Naive thymus-derived CD4-positive, alpha-beta T cell (primary cell): ENCODE measurements at regions of chr2 and their contacts with region 1.

Region 1: DNA sequence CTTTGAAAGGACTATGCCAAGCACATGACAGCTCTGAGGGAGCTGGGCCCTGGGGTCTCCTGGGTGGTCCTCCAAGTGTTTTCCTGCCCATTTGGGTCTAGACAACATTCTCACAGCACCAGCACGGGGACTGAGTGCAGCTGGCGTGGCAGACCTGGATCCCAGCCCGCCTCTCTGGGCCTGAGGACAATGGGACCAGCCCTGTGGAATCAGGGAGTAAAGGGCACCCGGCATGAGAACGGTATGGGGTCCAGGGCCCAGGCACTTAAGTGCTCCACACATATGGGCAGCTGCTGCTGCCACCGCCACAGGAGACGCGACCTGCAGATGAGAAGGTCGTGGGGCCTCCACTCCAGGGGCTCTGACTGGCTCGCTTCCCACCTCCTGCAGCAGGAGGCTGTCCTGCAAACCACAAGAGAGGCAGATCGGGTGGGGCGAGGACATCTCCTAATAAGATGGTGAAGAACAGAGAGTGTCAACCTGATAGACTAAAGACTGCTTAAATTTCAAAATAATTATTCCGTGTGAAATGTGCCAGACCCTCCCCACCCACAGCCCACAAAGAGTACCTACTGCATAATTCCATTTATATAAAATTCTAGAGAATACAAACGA is 46.3 kb downstream of the FAM178B start:
- DNase-seq: no peak
- ATAC-seq: no peak
- H3K4me3 ChIP-seq: no peak overlapping the region
- H3K4me3 Mint-ChIP-seq: peak overlapping the region in 8 of 10 donors; percentile 50 to 92 (median 78)
- H3K27ac ChIP-seq: no peak overlapping the region
- H3K27ac Mint-ChIP-seq: peak overlapping the region in 8 of 9 donors; percentile 43 to 94 (median 80)
- H3K4me1 ChIP-seq: peaks cover 19 to 25% of the 10 kb centered on the region in 2 donors
- H3K4me1 Mint-ChIP-seq: peaks cover 24 to 55% (median 46%) of the 10 kb centered on the region in 7 donors
- H3K27me3 ChIP-seq: no peaks in the 10 kb centered on the region
- H3K27me3 Mint-ChIP-seq: peaks cover 0 to 10% (median 0%) of the 10 kb centered on the region in 5 donors

Region 2: DNA sequence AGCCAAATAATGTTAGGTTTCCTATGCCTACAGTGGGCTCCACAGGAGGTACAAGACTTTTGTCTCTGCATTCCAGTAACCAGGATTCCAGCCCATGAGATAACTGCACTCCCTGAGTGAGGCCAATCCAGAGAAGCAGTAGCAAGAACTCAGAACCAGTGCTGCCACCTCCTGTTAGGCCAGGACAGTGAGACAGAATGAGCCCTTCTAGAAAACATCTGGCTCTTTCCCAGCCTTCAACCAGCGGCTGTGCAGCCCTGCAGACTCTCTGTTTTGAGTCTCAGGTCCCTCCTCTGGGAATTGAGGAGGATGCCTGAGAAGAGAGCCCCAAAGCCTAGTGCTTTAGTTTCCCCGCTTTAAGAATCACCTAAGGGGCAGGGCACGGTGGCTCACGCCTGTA is 359.3 kb before region 1 on chr2:
- CTCF ChIA-PET with region 1: no interaction called
- POLR2A ChIA-PET with region 1: no interaction called
- intact Hi-C with region 1: no loop called
- DNase-seq: no peak
- ATAC-seq: no peak
- H3K4me3 ChIP-seq: no peak overlapping the region
- H3K4me3 Mint-ChIP-seq: no peak overlapping the region
- H3K27ac ChIP-seq: no peak overlapping the region
- H3K27ac Mint-ChIP-seq: no peak overlapping the region
- H3K4me1 ChIP-seq: no peaks in the 10 kb centered on the region
- H3K4me1 Mint-ChIP-seq: peaks cover 0 to 2% (median 0%) of the 10 kb centered on the region in 7 donors
- H3K27me3 ChIP-seq: no peaks in the 10 kb centered on the region
- H3K27me3 Mint-ChIP-seq: peaks cover 0 to 4% (median 0%) of the 10 kb centered on the region in 5 donors

Region 3: GRCh38 chr2:96951093-96951654 is 11.1 kb after region 1 on chr2:
- CTCF ChIA-PET with region 1: interaction called, 16 read pairs
- POLR2A ChIA-PET with region 1: interaction called, 16 read pairs
- intact Hi-C with region 1: no loop called
- DNase-seq: peak; percentile 68 to 85 (median 80)
- ATAC-seq: peak; percentile 93
- H3K4me3 ChIP-seq: no peak overlapping the region
- H3K4me3 Mint-ChIP-seq: peak overlapping the region in 1 of 10 donors; percentile 61
- H3K27ac ChIP-seq: no peak overlapping the region
- H3K27ac Mint-ChIP-seq: peak overlapping the region in 6 of 9 donors; percentile 26 to 80 (median 61)
- H3K4me1 ChIP-seq: peaks cover 13 to 14% of the 10 kb centered on the region in 2 donors
- H3K4me1 Mint-ChIP-seq: peaks cover 14 to 40% (median 20%) of the 10 kb centered on the region in 7 donors
- H3K27me3 ChIP-seq: no peaks in the 10 kb centered on the region
- H3K27me3 Mint-ChIP-seq: peaks cover 0 to 2% (median 0%) of the 10 kb centered on the region in 5 donors